ENCODE measurements at regions of chr9 and their contacts with region 1.

Region 1: DNA sequence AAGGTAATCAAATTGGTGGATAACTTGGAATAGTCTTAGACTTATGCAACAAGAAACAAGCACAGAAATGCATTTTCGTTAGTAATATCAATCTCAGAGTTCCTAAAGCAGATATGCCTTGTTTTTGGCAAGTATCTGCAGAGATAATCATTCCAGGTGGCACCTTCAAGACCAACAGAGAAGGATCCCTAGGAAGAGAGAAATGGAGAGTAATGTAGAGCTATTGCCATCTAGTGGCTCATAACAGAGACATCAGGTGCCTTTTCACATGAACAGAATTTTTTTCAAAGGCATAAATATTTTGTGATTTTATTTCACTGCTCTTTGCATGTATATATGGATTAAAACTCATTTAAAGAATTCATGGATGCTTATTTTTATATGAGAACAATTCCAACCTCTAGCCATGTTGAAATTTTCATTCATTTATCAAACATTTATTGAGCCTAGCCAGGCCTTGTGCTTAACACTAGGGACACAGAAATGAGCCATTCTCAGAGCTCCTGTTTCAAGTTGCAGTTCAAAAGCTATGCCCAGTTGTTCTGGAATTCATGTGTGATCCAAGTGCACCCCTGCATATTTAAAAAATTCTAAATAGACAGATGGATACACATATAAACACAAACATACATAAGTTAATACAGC is 117.5 kb upstream of the OR13F1 start:
- DNase-seq: no peak
- ATAC-seq: peak in 1 of 8 donors; percentile 42
- H3K4me3 ChIP-seq: no peak overlapping the region
- H3K27ac ChIP-seq: no peak overlapping the region
- H3K4me1 ChIP-seq: peaks cover 0 to 13% (median 0%) of the 10 kb centered on the region in 9 donors
- H3K27me3 ChIP-seq: peaks cover 0 to 7% (median 0%) of the 10 kb centered on the region in 7 donors
- CTCF ChIP-seq: peak; percentile 24 to 79 (median 68)

Region 2: GRCh38 chr9:103397868-103398600 is 988.5 kb before region 1 on chr9:
- intact Hi-C with region 1: loop called in 2 of 10 experiments (anchors 10 kb)
- DNase-seq: no peak
- ATAC-seq: peak in 4 of 8 donors; percentile 25 to 53 (median 44)
- H3K4me3 ChIP-seq: no peak overlapping the region
- H3K27ac ChIP-seq: no peak overlapping the region
- H3K4me1 ChIP-seq: no peaks in the 10 kb centered on the region
- H3K27me3 ChIP-seq: no peaks in the 10 kb centered on the region
- CTCF ChIP-seq: peak in 8 of 9 donors; percentile 39 to 66 (median 61)

Region 3: GRCh38 chr9:104027295-104027694 is 359.3 kb before region 1 on chr9:
- intact Hi-C with region 1: loop called in 2 of 10 experiments (anchors 5 to 10 kb)
- DNase-seq: no peak
- ATAC-seq: no peak
- H3K4me3 ChIP-seq: no peak overlapping the region
- H3K27ac ChIP-seq: no peak overlapping the region
- H3K4me1 ChIP-seq: no peaks in the 10 kb centered on the region
- H3K27me3 ChIP-seq: no peaks in the 10 kb centered on the region
- CTCF ChIP-seq: no peak

Region 4: DNA sequence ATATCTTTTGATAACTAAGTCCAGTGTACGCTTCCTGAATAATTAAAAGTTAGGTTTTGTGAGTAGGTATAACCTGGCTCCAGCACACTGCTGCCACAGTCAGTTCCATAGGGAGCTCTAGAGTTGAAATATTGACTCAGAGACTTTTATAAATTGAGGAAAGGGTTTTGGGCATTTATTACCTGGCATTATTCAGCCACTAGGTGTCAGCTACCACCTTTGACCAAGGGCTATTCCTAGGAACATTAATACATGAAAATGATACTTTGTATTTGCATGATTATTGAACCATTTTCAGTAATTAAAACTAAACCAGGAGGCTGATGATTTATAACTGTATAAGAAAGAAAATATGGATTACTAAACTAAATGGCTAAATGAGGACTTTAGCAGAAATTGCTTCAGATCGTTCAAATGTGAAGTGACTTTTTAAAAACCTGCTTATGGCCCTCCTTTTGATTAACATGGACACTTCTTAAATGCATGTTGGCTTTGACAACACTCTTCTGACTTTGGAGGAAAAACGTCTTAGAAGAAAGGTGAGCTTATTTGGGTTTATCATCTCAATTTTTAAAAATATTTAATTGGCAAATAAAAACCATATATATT is 209.4 kb before region 1 on chr9:
- intact Hi-C with region 1: loop called in 7 of 10 experiments (anchors 2 to 10 kb)
- DNase-seq: no peak
- ATAC-seq: no peak
- H3K4me3 ChIP-seq: no peak overlapping the region
- H3K27ac ChIP-seq: no peak overlapping the region
- H3K4me1 ChIP-seq: no peaks in the 10 kb centered on the region
- H3K27me3 ChIP-seq: no peaks in the 10 kb centered on the region
- CTCF ChIP-seq: peak in 7 of 9 donors; percentile 28 to 58 (median 40)

Measured in heart right ventricle (tissue), 16 donors.